Colonic mucosa (tissue), 4 donors: ENCODE measurements at regions of chr20 and their contacts with region 1.

Region 1: GRCh38 chr20:54649511-54649962 is 174.1 kb downstream of the DOK5 start:
- DNase-seq: peak; percentile 83
- H3K4me3 ChIP-seq: no peak overlapping the region
- H3K27ac ChIP-seq: no peak overlapping the region
- H3K4me1 ChIP-seq: no peaks in the 10 kb centered on the region
- H3K27me3 ChIP-seq: no peaks in the 10 kb centered on the region
- CTCF ChIP-seq: peak; percentile 81

Region 2: DNA sequence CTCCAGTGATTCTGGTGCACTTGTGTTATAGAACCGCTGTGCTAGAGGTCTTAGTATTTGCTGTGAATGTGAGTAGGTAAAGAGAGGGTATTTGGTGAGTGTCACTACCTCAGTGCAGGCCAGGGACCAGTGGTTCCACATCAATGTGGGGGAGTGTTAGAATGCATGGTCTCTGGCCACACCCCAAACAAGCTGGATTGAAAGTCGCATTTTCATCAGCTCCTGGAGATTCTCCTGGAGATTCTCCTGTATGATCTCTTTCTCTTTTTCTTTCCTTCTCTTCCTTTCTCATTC is 552.4 kb before region 1 on chr20:
- intact Hi-C with region 1: loop called (anchors 5 kb)
- DNase-seq: no peak
- H3K4me3 ChIP-seq: no peak overlapping the region
- H3K27ac ChIP-seq: no peak overlapping the region
- H3K4me1 ChIP-seq: no peaks in the 10 kb centered on the region
- H3K27me3 ChIP-seq: no peaks in the 10 kb centered on the region
- CTCF ChIP-seq: no peak

Region 3: DNA sequence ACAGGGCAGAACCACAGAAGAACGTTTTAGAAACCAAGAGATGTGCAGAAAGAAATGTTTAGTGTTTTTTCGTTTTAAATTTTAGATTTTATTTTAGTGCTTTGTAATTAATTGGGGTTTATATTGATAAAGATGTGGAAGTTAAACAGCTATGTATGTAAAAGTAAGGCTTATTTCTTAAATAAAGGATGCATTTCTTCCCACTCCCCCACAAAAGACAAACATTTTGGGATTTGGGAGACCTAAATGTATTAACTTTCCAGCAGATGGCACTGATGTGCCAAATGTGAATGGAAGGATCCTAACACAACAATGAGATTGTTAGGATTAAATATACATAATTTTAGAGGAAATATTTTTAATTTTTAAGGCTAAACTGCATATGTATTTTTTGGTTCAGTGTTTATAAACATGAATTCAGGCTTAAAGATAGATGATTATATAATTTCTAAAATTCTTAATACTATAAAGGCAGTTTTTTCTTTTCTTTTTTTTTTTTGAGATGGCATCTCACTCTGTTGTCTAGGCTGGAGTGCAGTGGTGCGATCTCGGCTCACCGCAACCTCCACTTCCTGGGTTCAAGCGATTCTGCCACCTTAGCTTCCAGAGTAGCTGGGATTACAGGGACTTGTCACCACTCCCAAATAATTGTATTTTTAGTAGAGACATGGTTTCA is 429.6 kb before region 1 on chr20:
- intact Hi-C with region 1: loop called (anchors 5 kb)
- DNase-seq: no peak
- H3K4me3 ChIP-seq: no peak overlapping the region
- H3K27ac ChIP-seq: no peak overlapping the region
- H3K4me1 ChIP-seq: no peaks in the 10 kb centered on the region
- H3K27me3 ChIP-seq: no peaks in the 10 kb centered on the region
- CTCF ChIP-seq: no peak

Region 4: DNA sequence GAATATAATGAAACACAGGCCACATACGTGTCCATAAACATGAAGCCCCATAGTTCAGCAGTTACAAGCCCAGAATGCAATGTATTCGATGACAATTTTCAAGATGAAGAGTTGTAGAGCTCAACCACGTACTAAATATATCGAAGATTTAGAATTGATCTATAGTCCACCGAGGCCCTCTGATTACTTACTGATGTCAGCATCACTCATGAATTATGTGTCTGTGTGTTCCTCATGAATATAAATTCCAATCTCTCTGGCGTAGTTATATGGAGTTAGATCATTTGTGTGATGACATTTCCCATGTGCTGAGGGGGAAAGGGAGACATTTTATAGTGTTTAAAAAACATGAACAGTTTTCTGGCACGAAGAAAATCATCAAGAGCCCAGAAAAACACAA is 344.1 kb before region 1 on chr20:
- intact Hi-C with region 1: no loop called
- DNase-seq: no peak
- H3K4me3 ChIP-seq: no peak overlapping the region
- H3K27ac ChIP-seq: no peak overlapping the region
- H3K4me1 ChIP-seq: no peaks in the 10 kb centered on the region
- H3K27me3 ChIP-seq: no peaks in the 10 kb centered on the region
- CTCF ChIP-seq: no peak